Colonic mucosa (tissue), 4 donors: ENCODE measurements at regions of chr3 and their contacts with region 1.

Region 1: GRCh38 chr3:40179016-40179415 is 130.5 kb upstream of the EIF1B start:
- DNase-seq: peak; percentile 79
- H3K4me3 ChIP-seq: no peak overlapping the region
- H3K27ac ChIP-seq: no peak overlapping the region
- H3K4me1 ChIP-seq: no peaks in the 10 kb centered on the region
- H3K27me3 ChIP-seq: no peaks in the 10 kb centered on the region
- CTCF ChIP-seq: peak; percentile 67

Region 2: GRCh38 chr3:39541917-39542329 is 637.1 kb before region 1 on chr3:
- intact Hi-C with region 1: loop called (anchors 10 kb)
- DNase-seq: no peak
- H3K4me3 ChIP-seq: no peak overlapping the region
- H3K27ac ChIP-seq: no peak overlapping the region
- H3K4me1 ChIP-seq: no peaks in the 10 kb centered on the region
- H3K27me3 ChIP-seq: no peaks in the 10 kb centered on the region
- CTCF ChIP-seq: peak; percentile 33

Region 3: GRCh38 chr3:39707314-39707909 is 471.6 kb before region 1 on chr3:
- intact Hi-C with region 1: loop called (anchors 5 kb)
- DNase-seq: no peak
- H3K4me3 ChIP-seq: no peak overlapping the region
- H3K27ac ChIP-seq: no peak overlapping the region
- H3K4me1 ChIP-seq: no peaks in the 10 kb centered on the region
- H3K27me3 ChIP-seq: no peaks in the 10 kb centered on the region
- CTCF ChIP-seq: peak; percentile 55

Region 4: DNA sequence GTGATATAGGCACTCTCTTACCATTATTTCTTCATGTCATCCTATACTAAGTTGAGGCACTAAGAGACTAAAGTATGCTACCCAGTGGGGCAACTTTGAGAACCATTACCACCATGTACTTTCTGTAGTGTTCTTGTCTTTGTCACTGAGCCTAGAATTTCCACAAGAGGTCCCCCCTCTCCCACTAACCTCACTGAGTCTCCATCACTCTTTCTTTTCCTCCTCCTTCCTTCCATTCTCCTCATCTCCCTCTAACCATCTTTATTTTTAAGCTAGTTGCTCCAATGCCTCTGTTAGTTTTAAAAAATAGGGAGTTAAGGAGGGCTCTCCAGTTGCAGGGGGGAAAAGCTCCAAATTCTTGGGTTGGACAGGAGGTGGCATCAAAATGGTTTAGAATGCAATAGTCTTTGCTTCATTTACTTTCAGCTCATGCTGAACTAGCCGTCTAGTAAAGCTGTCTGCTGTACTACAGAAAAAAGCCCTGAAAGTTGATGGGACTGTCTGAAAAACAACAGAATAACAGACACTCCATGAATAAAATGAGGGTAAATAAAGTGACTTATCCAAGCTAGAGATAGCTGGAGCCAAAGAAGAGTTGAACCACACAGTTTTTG is 454.7 kb before region 1 on chr3:
- intact Hi-C with region 1: loop called (anchors 5 kb)
- DNase-seq: no peak
- H3K4me3 ChIP-seq: no peak overlapping the region
- H3K27ac ChIP-seq: no peak overlapping the region
- H3K4me1 ChIP-seq: no peaks in the 10 kb centered on the region
- H3K27me3 ChIP-seq: no peaks in the 10 kb centered on the region
- CTCF ChIP-seq: no peak

Region 5: GRCh38 chr3:39812537-39812936 is 366.5 kb before region 1 on chr3:
- intact Hi-C with region 1: loop called (anchors 5 kb)
- DNase-seq: peak; percentile 40
- H3K4me3 ChIP-seq: no peak overlapping the region
- H3K27ac ChIP-seq: no peak overlapping the region
- H3K4me1 ChIP-seq: no peaks in the 10 kb centered on the region
- H3K27me3 ChIP-seq: peaks cover 12% of the 10 kb centered on the region
- CTCF ChIP-seq: peak; percentile 32